ENCODE measurements at regions of chr1 and their contacts with region 1.

Region 1: DNA sequence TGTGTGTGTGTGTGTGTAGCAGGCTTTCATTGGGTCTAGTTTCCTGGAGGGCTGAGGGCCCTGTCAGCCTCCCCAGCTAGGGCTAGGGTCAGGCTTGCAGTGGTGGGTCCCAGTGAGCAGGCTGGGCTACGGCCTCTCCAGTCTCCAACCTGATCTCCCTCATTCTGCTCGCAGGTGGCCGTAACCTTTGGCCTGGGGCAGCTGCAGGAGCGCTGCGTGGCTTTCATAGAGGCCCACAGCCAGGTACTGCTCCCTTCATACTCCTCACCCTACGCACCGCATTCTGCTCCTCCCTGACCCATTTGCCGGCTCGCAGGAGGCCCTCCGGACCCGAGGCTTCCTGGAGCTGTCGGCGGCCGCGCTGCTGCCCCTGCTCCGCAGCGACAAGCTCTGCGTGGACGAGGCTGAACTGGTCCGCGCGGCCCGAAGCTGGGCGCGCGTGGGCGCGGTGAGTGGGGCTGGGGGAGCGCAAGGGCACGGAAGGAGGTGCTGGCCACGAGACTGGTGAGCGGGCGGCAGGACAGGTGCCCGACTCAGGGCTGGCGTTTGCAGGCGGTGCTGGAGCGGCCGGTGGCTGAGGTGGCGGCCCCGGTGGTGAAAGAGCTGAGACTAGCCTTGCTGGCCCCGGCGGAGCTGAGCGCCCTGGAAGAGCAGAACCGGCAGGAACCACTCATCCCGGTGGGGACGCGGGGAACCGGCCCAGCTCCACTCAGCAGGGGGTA is 4.7 kb downstream of the BTBD19 start:
- DNase-seq: peak in 1 of 2 experiments; percentile 78
- H3K4me3 ChIP-seq: peak overlapping the region; percentile 32 to 73 (median 64)
- H3K27ac ChIP-seq: no peak overlapping the region
- H3K4me1 ChIP-seq: peaks cover 8 to 26% (median 18%) of the 10 kb centered on the region in 4 experiments
- H3K27me3 ChIP-seq: peaks cover 0 to 8% (median 1%) of the 10 kb centered on the region in 4 experiments; a peak in 4 of 7 replicates
- CTCF ChIP-seq: no peak
- EP300 ChIP-seq: no peak
- POLR2A ChIP-seq: no peak
- RAD21 ChIP-seq: no peak

Region 2: DNA sequence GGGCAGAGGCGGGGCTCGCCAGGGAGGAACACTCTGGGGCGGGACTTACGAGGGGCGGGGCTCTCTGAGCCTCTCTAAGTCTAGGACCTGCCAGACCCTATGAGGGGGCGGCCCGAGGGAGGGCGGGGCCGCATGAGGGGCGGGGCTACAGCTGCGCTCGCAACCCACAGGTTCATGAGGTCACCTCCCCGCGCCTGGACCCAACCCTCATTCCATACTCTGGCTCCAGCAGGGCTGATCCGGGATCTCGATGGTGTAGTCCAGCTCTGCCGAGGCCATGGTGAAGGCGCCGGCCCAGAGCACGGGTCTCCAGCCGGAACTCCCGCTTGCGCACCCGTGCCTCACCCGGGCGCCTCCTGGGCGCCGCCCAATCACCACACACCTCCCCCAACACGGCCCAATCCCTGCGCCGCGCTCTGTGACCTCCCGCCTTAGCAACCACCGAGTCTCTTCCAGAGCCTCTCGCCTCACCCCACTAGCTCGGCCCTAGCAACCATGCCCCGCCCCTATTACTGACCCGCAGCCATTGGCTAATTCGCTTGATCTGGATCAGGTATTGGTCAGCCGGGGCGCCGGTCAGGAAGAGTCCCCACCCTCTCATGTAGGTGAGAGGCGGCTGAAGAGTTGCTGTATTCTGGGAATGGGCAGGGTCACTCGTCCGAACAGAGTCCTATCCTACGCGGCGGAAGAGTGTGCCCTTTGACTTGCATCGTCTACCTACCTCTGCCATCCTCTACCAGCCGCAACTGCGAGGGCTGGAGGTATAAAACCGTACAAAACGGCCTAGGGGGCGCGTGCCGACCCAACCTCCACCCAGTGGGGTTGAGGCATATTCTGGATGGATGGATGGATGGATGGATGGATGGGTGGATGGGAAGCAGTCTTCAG is 138.6 kb before region 1 on chr1 and contains the starts of genes ARMH1 and TMEM53:
- CTCF ChIA-PET with region 1: no interaction called
- POLR2A ChIA-PET with region 1: no interaction called
- DNase-seq: peak; percentile 97 to 98
- H3K4me3 ChIP-seq: peak within 1 kb of the TSS; percentile 58 to 93 (median 75)
- H3K27ac ChIP-seq: peak within 1 kb of the TSS; percentile 80
- H3K4me1 ChIP-seq: peaks cover 4 to 11% (median 6%) of the 10 kb centered on the region in 4 experiments; a peak in 6 of 7 replicates
- H3K27me3 ChIP-seq: no peaks in the 10 kb centered on the region; a peak in 1 of 7 replicates
- CTCF ChIP-seq: no peak
- EP300 ChIP-seq: no peak
- POLR2A ChIP-seq: peak; percentile 82 to 89
- RAD21 ChIP-seq: no peak
- total RNA-seq, gene ARMH1: 0.63 and 0.82 TPM in 2 replicates
- total RNA-seq, gene TMEM53: 6.7 and 9.5 TPM in 2 replicates

Region 3: DNA sequence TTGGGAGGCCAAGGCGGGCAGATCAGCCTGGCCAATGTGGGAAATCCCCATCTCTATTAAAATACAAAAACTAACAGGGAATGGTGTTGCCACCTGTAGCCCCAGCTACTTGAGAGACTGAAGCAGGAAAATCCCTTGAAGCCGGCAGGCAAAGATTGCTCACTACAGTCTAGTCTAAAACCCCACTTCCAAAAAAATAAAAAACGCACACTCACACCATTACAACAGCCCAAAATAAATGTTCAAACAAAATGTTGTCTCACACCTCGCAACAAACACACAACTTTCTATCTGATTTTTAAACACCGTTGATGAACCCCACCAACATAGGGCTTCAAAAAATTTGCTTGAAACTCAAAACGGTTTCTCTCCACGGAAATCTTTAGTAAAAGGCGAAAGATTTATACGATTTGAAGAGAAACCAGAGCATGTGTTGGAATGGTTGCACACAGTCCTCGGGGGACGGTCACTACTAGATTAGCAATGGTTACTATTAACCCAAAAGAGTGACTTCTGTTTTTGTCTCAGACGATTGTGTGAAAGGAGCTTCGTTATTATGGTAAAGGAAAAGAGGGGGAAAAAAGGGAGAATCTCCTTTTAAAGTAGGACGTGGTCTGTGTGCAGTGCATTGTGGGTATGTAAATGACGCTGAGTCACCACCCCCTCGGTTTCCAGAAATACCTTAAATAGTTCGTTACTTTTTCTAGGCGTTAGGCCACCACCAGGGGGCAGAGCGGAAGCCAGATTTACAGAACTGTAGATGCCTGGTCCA is 82.1 kb before region 1 on chr1 and contains the start of gene RNU5D-1:
- CTCF ChIA-PET with region 1: interaction called, 15 read pairs
- POLR2A ChIA-PET with region 1: interaction called, 92 read pairs
- DNase-seq: peak in 1 of 2 experiments; percentile 94
- H3K4me3 ChIP-seq: peak within 1 kb of the TSS in 1 of 4 experiments; percentile 31; a peak in 1 of 8 replicates
- H3K27ac ChIP-seq: peak within 1 kb of the TSS; percentile 94
- H3K4me1 ChIP-seq: peaks cover 0 to 3% (median under 1%) of the 10 kb centered on the region in 4 experiments; a peak in 4 of 7 replicates
- H3K27me3 ChIP-seq: no peaks in the 10 kb centered on the region
- CTCF ChIP-seq: peak; percentile 48 to 80 (median 55)
- EP300 ChIP-seq: 0 out of 3 replicates have a peak, but pooled peaks of 1 of the 2 experiments have one; percentile 30
- POLR2A ChIP-seq: peak; percentile 99
- RAD21 ChIP-seq: peak; percentile 14 to 32; a peak in 1 of 4 replicates
- total RNA-seq, gene RNU5D-1: 17.4 TPM in 1 of 2 replicates, not detected in the other

Region 4: GRCh38 chr1:44780583-44781121 is 32.3 kb before region 1 on chr1:
- CTCF ChIA-PET with region 1: interaction called, 11 read pairs
- POLR2A ChIA-PET with region 1: interaction called, 98 read pairs
- DNase-seq: no peak
- H3K4me3 ChIP-seq: no peak overlapping the region
- H3K27ac ChIP-seq: no peak overlapping the region
- H3K4me1 ChIP-seq: peaks cover 0 to 18% (median 9%) of the 10 kb centered on the region in 4 experiments; a peak in 6 of 7 replicates
- H3K27me3 ChIP-seq: peaks cover 0 to 3% (median 0%) of the 10 kb centered on the region in 4 experiments; a peak in 3 of 7 replicates
- CTCF ChIP-seq: no peak
- EP300 ChIP-seq: no peak
- POLR2A ChIP-seq: peak in 1 of 2 experiments; percentile 65; a peak in 2 of 3 replicates
- RAD21 ChIP-seq: no peak

Region 5: GRCh38 chr1:44786138-44786840 is 26.7 kb before region 1 on chr1:
- CTCF ChIA-PET with region 1: interaction called, 51 read pairs
- POLR2A ChIA-PET with region 1: interaction called, 147 read pairs
- DNase-seq: peak in 1 of 2 experiments; percentile 94
- H3K4me3 ChIP-seq: peak overlapping the region; percentile 17 to 58 (median 46)
- H3K27ac ChIP-seq: no peak overlapping the region
- H3K4me1 ChIP-seq: peaks cover 4 to 18% (median 14%) of the 10 kb centered on the region in 4 experiments
- H3K27me3 ChIP-seq: peaks cover 0 to 7% (median 2%) of the 10 kb centered on the region in 4 experiments; a peak in 3 of 7 replicates
- CTCF ChIP-seq: peak; percentile 80 to 100 (median 100)
- EP300 ChIP-seq: peak in 1 of 2 experiments; percentile 98; a peak in 1 of 3 replicates
- POLR2A ChIP-seq: peak in 1 of 2 experiments; percentile 50; a peak in 1 of 3 replicates
- RAD21 ChIP-seq: peak; percentile 83 to 84

Region 6: DNA sequence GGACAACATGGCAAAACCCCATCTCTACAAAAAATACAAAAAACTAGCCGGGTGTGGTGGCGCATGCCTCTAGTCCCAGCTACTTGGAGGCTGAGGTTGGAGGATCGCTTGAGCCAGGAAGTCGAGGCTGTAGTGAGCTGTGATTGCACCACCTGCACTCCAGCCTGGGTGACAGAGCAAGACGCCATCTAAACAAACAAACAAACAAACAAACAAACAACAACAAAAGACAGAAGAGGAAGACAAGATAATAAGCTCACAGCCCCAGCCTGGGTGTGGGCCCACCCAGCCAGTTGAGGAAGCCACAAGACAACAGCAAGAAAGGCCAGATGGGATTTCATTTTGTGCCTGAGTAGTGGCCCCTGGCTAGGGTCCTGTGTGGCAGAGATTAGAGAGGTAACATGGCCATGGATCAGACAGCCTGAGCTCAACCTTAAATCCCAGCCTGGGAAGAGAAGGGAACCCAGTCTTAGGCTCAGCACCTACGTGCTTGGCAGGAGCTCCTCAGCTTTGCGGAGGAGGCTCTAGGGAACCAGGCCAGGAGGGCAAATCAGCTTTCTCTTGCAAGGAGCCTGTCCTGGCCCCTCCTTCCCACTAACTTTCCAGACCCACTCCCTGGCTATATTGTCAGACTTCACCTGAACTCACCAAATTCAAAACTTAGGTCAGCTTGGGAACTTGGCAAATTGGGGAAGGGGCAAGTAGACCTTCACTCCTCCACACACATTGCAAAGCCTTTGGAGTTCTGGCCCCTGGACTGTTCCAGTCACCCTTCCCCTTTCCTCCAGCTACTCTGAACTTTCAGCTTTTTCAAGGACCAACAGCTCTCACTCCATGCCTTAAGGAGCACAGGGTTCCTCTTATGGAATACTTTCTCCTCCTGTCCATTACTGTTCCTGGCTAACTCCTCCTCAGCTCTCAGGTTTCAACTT is 19.9 kb before region 1 on chr1:
- CTCF ChIA-PET with region 1: interaction called, 51 read pairs
- POLR2A ChIA-PET with region 1: interaction called, 547 read pairs
- DNase-seq: no peak
- H3K4me3 ChIP-seq: no peak overlapping the region
- H3K27ac ChIP-seq: no peak overlapping the region; the same call in 1 of the 2 replicates
- H3K4me1 ChIP-seq: peaks cover 0 to 5% (median 5%) of the 10 kb centered on the region in 4 experiments
- H3K27me3 ChIP-seq: no peaks in the 10 kb centered on the region
- CTCF ChIP-seq: no peak
- EP300 ChIP-seq: no peak
- POLR2A ChIP-seq: no peak
- RAD21 ChIP-seq: no peak

Region 7: DNA sequence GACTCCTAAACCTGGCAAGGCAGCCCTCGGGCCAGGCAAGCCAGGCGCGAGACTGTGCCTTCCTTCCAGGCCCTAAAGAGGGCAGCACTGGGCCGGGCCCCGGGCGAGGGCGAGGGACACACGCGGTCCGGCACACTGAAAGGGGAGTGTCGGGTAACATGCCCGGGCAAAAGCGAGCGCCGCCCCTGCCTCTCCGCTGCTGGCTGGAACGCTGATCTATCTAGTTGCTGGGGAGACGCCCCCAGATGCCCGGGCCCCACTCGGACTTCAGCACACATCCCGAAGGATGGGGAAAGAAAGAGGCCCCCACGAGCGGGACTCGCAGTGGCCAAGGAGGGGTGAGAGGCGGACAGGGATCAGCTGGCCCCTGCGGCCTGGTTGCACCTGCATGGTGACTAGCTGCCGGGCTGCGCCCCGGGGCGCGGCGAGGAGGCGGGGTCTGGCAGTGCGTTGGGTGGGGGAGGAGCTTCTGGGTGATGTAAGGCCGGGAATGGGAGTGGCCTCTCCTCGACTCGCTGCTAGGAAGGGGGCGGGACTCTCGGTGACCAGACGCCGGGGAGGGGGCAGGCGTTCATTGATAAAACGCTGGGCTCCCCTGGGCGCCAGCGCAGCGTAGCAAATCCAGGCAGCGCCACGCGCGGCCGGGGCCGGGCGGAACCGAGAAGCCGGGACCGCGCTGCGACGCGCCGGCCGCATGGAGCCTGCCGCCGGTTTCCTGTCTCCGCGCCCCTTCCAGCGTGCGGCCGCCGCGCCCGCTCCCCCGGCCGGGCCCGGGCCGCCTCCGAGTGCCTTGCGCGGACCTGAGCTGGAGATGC is 13.0 kb before region 1 on chr1 and contains the start of gene PLK3:
- CTCF ChIA-PET with region 1: interaction called, 37 read pairs
- POLR2A ChIA-PET with region 1: interaction called, 547 read pairs
- DNase-seq: peak; percentile 93 to 98
- H3K4me3 ChIP-seq: peak within 1 kb of the TSS; percentile 60 to 76 (median 66)
- H3K27ac ChIP-seq: peak within 1 kb of the TSS; percentile 91
- H3K4me1 ChIP-seq: peaks cover 0 to 5% (median 2%) of the 10 kb centered on the region in 4 experiments; a peak in 3 of 7 replicates
- H3K27me3 ChIP-seq: peaks cover 0 to 5% (median 0%) of the 10 kb centered on the region in 4 experiments; a peak in 2 of 7 replicates
- CTCF ChIP-seq: peak in 2 of 3 experiments; percentile 89 to 97; a peak in 3 of 4 replicates
- EP300 ChIP-seq: no peak
- POLR2A ChIP-seq: peak in 1 of 2 experiments; percentile 98; a peak in 2 of 3 replicates
- RAD21 ChIP-seq: peak; percentile 71 to 79
- total RNA-seq, gene PLK3: 7.9 and 9.7 TPM in 2 replicates

Region 8: GRCh38 chr1:45116340-45116739 is 303.4 kb after region 1 on chr1:
- CTCF ChIA-PET with region 1: no interaction called
- POLR2A ChIA-PET with region 1: no interaction called
- DNase-seq: no peak
- H3K4me3 ChIP-seq: no peak overlapping the region
- H3K27ac ChIP-seq: no peak overlapping the region
- H3K4me1 ChIP-seq: no peaks in the 10 kb centered on the region; a peak in 1 of 7 replicates
- H3K27me3 ChIP-seq: peaks cover 0 to 1% (median 0%) of the 10 kb centered on the region in 4 experiments; a peak in 1 of 7 replicates
- CTCF ChIP-seq: no peak
- EP300 ChIP-seq: no peak
- POLR2A ChIP-seq: no peak
- RAD21 ChIP-seq: no peak